Heart right ventricle (tissue), 16 donors: ENCODE measurements at regions of chr10 and their contacts with region 1.

Region 1: DNA sequence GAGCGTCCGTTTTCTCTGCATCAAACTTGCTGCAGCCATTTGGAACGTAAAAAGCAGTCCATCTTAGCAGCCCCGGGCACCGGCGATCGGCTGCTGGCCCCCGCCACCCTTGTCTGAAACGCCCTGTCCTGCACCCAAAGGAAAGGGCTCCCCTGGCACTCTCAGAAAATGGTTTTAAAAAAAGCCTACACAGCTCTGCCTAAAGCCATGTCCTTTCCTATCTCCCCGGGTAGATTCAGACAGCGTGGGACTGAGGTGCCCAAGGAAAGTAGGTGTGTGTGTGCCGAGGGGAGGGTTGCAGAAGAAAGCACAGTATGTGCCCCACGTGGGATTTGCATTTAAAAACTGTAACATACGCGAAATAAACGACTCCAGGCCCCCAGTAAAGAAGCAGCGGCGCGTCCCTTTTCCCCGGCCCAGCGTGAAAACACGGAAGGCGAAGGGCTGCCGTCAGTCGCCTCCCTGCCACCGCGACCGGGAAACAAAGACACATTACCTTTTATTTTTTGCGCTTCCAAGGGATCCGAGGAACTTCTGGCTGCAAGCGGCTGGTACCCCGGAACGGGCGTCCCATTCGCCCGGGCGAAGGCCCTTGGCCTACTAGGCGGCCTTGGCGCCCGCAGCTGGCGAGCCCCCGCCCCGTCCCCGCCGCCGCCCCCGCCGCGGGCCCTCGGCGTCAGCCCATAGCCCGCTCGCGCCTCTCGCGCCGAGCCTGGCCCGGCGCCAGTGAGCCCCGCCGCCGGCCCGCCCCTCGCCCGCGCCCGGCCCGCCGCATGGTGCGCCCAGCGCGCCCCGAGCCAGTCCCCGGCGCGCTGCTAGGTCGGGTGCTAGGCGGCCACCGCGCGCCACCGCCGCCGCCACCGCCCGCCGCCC is 304.6 kb downstream of the PRPF18 start:
- DNase-seq: peak in 1 of 2 donors; percentile 47
- ATAC-seq: peak; percentile 43 to 71 (median 64)
- H3K4me3 ChIP-seq: peak overlapping the region; percentile 36 to 75 (median 65)
- H3K27ac ChIP-seq: peak overlapping the region; percentile 58 to 91 (median 82)
- H3K4me1 ChIP-seq: peaks cover 0 to 54% (median 21%) of the 10 kb centered on the region in 9 donors
- H3K27me3 ChIP-seq: peaks cover 0 to 43% (median 0%) of the 10 kb centered on the region in 7 donors
- CTCF ChIP-seq: no peak

Region 2: GRCh38 chr10:13475124-13475523 is 416.2 kb before region 1 on chr10:
- intact Hi-C with region 1: no loop called
- DNase-seq: no peak
- ATAC-seq: no peak
- H3K4me3 ChIP-seq: no peak overlapping the region
- H3K27ac ChIP-seq: no peak overlapping the region
- H3K4me1 ChIP-seq: no peaks in the 10 kb centered on the region
- H3K27me3 ChIP-seq: no peaks in the 10 kb centered on the region
- CTCF ChIP-seq: no peak

Region 3: GRCh38 chr10:13990946-13991345 is 99.6 kb after region 1 on chr10:
- intact Hi-C with region 1: loop called in 2 of 10 experiments (anchors 5 kb)
- DNase-seq: peak; percentile 31 to 58
- ATAC-seq: peak in 7 of 8 donors; percentile 20 to 71 (median 63)
- H3K4me3 ChIP-seq: peak overlapping the region in 6 of 10 donors; percentile 3 to 34 (median 20)
- H3K27ac ChIP-seq: peak overlapping the region; percentile 46 to 93 (median 78)
- H3K4me1 ChIP-seq: peaks cover 6 to 65% (median 51%) of the 10 kb centered on the region in 9 donors
- H3K27me3 ChIP-seq: no peaks in the 10 kb centered on the region
- CTCF ChIP-seq: no peak

Region 4: DNA sequence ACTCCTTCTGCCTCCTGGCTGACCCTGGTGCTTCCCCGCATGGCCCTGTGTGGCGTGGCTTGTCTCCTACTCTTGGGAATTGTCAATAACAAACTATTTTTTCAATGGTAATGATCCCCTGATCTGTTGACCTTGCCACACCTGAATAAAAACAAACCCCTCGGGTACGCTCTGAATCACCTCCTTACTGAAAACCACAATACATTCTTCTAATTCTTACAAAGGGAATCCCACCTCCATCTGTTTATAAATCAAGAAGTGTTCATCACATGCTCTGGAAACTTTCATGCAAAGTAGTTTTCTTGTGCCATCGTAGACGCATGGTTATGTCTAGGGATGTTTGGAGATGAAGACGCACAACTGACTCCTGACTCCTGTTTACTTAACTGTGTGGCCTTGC is 193.5 kb after region 1 on chr10:
- intact Hi-C with region 1: loop called in 2 of 10 experiments (anchors 5 to 10 kb)
- DNase-seq: no peak
- ATAC-seq: no peak
- H3K4me3 ChIP-seq: no peak overlapping the region
- H3K27ac ChIP-seq: no peak overlapping the region
- H3K4me1 ChIP-seq: peaks cover 0 to 12% (median 7%) of the 10 kb centered on the region in 9 donors
- H3K27me3 ChIP-seq: peaks cover 0 to 8% (median 0%) of the 10 kb centered on the region in 7 donors
- CTCF ChIP-seq: no peak

Region 5: GRCh38 chr10:14093730-14094484 is 202.5 kb after region 1 on chr10:
- intact Hi-C with region 1: loop called in 2 of 10 experiments (anchors 5 to 10 kb)
- DNase-seq: no peak
- ATAC-seq: peak in 6 of 8 donors; percentile 25 to 63 (median 44)
- H3K4me3 ChIP-seq: no peak overlapping the region
- H3K27ac ChIP-seq: no peak overlapping the region
- H3K4me1 ChIP-seq: peaks cover 0 to 12% (median 5%) of the 10 kb centered on the region in 9 donors
- H3K27me3 ChIP-seq: no peaks in the 10 kb centered on the region
- CTCF ChIP-seq: peak; percentile 22 to 73 (median 62)

Region 6: GRCh38 chr10:14225379-14226150 is 334.2 kb after region 1 on chr10:
- intact Hi-C with region 1: no loop called
- DNase-seq: no peak
- ATAC-seq: no peak
- H3K4me3 ChIP-seq: no peak overlapping the region
- H3K27ac ChIP-seq: no peak overlapping the region
- H3K4me1 ChIP-seq: no peaks in the 10 kb centered on the region
- H3K27me3 ChIP-seq: peaks cover 0 to 13% (median 6%) of the 10 kb centered on the region in 7 donors
- CTCF ChIP-seq: no peak